ENCODE measurements at regions of chr20 and their contacts with region 1.

Region 1: GRCh38 chr20:32674362-32674789 is 635 bp upstream of the C20orf203 start:
- DNase-seq: peak; percentile 71
- ATAC-seq: no peak
- H3K4me3 Mint-ChIP-seq: no peak overlapping the region
- H3K27ac Mint-ChIP-seq: peak overlapping the region; percentile 0
- H3K4me1 Mint-ChIP-seq: peaks cover 29% of the 10 kb centered on the region
- H3K27me3 Mint-ChIP-seq: no peaks in the 10 kb centered on the region

Region 2: DNA sequence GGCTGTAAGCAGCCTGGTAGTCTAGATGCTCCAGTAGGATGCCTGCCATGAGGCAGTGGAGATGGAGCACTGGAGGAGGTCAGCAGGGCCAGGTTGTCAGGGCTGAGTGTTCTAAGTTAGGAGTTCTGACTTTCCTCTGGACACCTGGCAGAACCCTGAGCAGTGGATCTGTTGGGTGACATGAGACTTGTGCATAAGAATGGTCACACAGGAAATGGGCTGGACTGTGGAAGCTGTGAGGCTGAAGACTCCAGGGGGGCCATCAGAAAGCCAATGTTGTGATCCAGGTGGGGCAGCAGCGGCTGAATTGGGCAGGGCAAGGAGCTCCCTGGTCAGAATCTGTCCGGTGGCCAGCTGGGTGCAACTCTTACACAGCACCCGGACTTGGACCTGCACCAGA is 23.2 kb after region 1 on chr20:
- POLR2A ChIA-PET with region 1: no interaction called
- DNase-seq: no peak
- ATAC-seq: no peak
- H3K4me3 Mint-ChIP-seq: no peak overlapping the region
- H3K27ac Mint-ChIP-seq: no peak overlapping the region
- H3K4me1 Mint-ChIP-seq: peaks cover 2% of the 10 kb centered on the region
- H3K27me3 Mint-ChIP-seq: no peaks in the 10 kb centered on the region

Region 3: DNA sequence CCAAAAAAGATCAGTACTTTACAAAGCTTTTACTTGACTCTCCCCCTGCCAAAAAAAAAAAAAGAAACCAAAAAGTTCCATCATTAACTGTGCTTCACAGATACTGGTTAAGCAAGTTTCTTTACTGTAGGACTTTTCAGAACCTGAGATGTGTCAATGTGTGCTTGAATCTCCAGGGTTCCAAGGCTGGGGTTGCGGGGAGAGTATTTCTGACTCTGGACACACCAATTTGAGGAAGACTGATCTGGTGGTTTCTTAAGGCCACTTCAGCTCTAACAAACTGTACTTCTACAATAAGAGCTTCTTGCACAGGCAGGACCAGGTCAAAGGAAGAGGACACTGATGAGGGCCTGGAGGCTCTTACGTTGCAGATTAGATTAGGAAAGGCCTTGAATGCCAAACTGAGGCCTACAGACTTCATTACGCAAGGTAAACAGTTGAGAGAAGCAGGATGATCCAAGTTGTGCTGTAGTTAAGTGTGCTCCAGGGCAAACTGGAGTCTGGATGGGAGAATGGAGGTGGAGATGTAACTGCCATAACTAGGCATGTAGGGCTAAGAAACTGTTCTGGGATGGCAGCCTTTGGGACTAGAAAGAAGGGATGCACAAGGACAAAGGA is 44.5 kb after region 1 on chr20:
- POLR2A ChIA-PET with region 1: no interaction called
- DNase-seq: no peak
- ATAC-seq: no peak
- H3K4me3 Mint-ChIP-seq: no peak overlapping the region
- H3K27ac Mint-ChIP-seq: peak overlapping the region; percentile 7
- H3K4me1 Mint-ChIP-seq: peaks cover 4% of the 10 kb centered on the region
- H3K27me3 Mint-ChIP-seq: no peaks in the 10 kb centered on the region

Region 4: DNA sequence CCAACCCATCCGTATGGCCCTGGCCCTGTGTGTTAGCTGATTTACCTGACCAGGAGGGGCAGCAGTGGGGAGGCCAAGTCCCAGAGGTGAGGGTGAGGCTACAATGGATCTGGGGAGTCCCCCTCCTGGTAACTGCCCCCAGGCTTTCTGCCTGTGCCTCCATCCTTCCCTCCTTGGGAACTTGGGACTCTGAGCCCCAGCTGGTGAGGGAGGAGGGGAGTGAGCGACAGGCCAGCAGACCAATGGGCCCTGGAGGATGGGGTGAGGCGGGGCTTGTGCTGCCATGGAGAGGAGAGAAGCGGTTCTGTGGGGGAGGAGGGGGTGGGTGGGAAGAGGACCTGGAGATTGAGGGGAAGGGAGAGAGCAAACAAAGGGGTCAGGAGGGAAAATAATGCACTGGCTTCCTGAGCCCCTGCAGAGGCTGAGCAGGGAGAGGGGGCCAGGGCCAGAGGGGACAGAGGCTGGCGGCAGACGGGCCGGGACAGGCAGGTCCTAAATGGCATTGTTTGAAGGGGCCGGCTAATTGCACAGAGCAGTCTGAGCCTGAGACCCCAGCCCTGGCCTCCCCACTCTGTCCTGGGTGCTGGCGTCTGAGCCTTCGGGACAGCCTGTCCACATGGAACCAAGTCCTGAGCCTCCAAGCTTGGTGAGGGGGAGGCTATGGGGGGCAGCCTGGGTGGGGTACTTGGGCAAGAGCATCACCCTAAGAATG is 105.3 kb after region 1 on chr20:
- POLR2A ChIA-PET with region 1: interaction called, 46 read pairs
- DNase-seq: no peak
- ATAC-seq: no peak
- H3K4me3 Mint-ChIP-seq: no peak overlapping the region
- H3K27ac Mint-ChIP-seq: no peak overlapping the region
- H3K4me1 Mint-ChIP-seq: peaks cover 16% of the 10 kb centered on the region
- H3K27me3 Mint-ChIP-seq: no peaks in the 10 kb centered on the region

Measured in activated naive CD8-positive, alpha-beta T cell treated with anti-CD3 and anti-CD28 coated beads, Interleukin-2, amount 10 ng/mL, durations not matched to agents 7 days and 5 days (primary cell).